ENCODE measurements at regions of chr1 and their contacts with region 1.

Region 1: DNA sequence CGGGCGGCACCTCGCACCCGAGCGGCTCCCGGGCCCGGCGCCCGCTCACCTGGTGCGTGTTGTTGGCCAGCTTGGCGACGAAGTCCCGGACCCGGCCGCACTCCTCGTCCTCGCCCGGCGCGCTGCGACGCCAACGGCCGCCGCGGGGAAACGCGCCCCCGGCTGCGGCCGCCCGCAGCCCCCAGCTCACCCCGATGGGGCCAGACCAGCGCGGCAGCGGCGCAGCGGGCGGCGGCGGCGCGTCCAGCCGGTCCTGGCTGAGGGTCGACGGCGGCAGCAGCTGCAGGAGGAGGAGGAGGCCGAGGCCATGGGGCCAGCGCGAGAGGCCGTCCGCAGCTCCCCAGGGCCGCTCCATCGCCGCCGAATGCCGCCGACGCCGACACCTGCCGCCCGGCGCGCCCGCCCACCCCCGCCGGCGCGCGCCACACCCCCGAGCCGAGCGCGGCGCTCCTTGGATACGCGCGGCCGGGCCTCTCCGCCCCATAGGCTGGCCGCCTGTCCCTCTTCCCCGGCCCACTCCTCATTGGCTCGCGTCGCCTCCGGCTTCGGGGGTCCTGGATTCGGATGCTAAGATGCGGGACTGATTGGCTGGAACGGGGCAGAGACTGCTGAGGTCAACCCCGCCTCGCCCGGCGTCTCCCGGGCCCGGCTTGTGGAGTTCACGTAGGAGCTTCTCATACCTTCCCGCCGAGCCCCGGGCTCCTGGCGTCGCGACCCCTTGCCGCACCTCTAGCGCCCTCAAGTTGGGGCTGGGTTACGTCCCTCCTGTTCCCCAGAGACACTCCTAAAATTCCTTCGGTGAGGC is at the start of gene SORT1:
- DNase-seq: peak; percentile 32
- H3K4me3 ChIP-seq: peak within 1 kb of the TSS; percentile 50
- H3K27me3 ChIP-seq: no peaks in the 10 kb centered on the region
- CTCF ChIP-seq: 0 out of 2 replicates have a peak, but pooled peaks have one; percentile 10
- polyA plus RNA-seq, gene SORT1: 38.6 and 52.6 TPM in 2 replicates

Region 2: DNA sequence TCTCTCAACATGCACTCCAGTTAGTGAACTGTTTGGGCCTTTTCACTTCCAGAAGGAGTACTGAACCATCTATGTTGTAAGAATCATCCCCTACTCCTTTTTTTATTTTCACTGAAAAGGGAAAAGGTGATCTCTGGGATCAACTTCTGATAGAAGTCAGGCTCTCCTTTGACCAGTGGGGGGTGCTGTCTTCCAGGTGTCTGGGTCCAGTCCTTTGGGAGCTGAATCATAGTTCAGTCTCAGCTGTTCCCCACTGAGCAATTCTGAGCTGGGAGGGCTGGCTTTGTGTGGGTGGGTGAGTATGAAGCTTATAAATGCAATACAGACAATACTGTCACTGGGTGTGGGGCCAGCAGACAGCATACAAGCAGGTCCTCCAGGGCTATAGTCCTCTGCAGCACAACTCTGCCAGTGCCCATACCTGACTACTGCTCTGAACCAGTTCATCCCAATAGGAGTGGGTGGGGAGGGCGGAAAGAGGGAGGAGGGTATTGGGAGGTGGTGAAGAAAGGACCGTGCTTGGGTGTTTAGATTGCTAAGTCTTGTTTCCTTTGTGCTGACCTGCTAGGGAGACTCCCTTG is 196.5 kb before region 1 on chr1:
- CTCF ChIA-PET with region 1: interaction called, 25 read pairs
- POLR2A ChIA-PET with region 1: no interaction called
- DNase-seq: peak; percentile 65
- H3K4me3 ChIP-seq: no peak overlapping the region
- H3K27me3 ChIP-seq: no peaks in the 10 kb centered on the region
- CTCF ChIP-seq: peak; percentile 85

Region 3: DNA sequence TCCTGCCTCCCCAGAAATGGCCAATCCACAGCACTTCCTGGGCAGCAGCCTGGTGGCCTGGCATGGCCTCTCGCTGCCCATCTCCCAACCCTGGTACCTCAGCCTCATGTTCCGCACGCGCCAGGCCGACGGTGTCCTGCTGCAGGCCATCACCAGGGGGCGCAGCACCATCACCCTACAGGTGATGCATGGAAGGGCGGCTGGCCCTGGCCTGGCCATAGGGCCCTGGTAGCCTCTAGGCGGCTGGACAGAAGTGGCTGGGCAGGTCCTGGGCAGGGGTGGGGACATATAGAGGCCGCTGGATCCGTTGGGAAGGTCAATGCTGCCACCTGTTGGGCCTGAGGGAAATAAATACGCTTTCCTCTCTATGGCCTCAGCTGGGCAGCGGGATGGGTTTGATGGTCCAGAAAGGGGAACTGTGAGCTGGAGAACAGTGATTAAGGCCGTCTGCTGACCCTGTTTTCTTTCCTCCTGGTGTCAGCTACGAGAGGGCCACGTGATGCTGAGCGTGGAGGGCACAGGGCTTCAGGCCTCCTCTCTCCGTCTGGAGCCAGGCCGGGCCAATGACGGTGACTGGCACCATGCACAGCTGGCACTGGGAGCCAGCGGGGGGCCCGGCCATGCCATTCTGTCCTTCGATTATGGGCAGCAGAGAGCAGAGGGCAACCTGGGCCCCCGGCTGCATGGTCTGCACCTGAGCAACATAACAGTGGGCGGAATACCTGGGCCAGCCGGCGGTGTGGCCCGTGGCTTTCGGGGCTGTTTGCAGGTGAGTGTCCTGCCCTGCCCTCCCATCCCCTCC is 133.9 kb before region 1 on chr1:
- CTCF ChIA-PET with region 1: interaction called, 77 read pairs
- POLR2A ChIA-PET with region 1: no interaction called
- DNase-seq: no peak
- H3K4me3 ChIP-seq: no peak overlapping the region
- H3K27me3 ChIP-seq: no peaks in the 10 kb centered on the region
- CTCF ChIP-seq: peak; percentile 99

Region 4: GRCh38 chr1:109282952-109283747 is 114.6 kb before region 1 on chr1 and contains the start of gene PSRC1:
- CTCF ChIA-PET with region 1: interaction called, 140 read pairs
- POLR2A ChIA-PET with region 1: no interaction called
- DNase-seq: peak; percentile 85
- H3K4me3 ChIP-seq: peak within 1 kb of the TSS; percentile 83
- H3K27me3 ChIP-seq: no peaks in the 10 kb centered on the region
- CTCF ChIP-seq: peak; percentile 64
- polyA plus RNA-seq, gene PSRC1: 17.9 and 25.9 TPM in 2 replicates

Region 5: DNA sequence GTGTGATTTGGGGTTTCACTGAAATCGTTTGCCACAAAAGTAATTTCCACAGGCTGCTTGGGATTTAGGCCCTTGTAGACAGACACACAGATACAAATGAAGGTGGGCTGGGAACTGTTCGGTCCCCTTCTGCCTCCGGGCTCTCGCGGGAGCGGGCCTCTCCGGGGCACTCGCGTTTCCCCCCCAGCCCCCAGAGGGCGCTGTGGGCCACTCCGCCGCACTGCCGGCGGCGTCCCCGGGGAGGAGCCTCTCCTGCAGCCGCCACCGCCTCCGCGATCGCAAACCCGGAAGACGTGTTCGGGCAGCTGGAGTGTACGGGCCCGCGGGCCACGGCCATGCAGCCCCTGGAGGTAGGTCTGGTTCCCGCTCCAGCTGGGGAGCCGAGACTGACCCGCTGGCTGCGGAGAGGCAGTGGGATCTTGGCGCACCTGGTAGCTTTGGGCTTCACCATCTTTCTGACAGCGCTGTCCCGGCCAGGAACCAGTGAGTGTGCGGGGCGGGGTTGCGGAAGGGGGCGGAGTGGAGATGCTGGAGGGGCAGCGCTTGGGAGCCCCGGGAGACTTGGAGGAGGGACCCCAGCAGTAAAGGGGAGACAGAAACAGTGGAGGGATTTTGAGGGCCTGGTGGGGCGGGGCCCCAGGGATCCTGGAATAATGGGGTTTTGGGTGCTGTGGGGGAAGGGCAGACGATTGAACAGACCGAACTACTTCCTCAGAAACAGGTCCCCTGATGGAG is 96.2 kb after region 1 on chr1 and contains the start of gene CYB561D1:
- CTCF ChIA-PET with region 1: interaction called, 15 read pairs
- POLR2A ChIA-PET with region 1: no interaction called
- DNase-seq: no peak
- H3K4me3 ChIP-seq: peak within 1 kb of the TSS; percentile 83
- H3K27me3 ChIP-seq: no peaks in the 10 kb centered on the region
- CTCF ChIP-seq: peak; percentile 87
- polyA plus RNA-seq, gene CYB561D1: 8.2 and 10.8 TPM in 2 replicates

Measured in BJ (cell line).